Left colon (tissue), 2 donors: ENCODE measurements at regions of chr9 and their contacts with region 1.

Region 1: GRCh38 chr9:34611829-34612630 is at the start of gene RPP25L:
- DNase-seq: peak; percentile 86 to 88
- ATAC-seq: peak; percentile 95
- total RNA-seq, gene RPP25L: 36.4 to 40.7 TPM

Region 2: GRCh38 chr9:34701769-34702736 is 90.0 kb after region 1 on chr9:
- intact Hi-C with region 1: loop called in 1 of 2 experiments (anchors 10 kb)
- DNase-seq: peak; percentile 80 to 91
- ATAC-seq: peak; percentile 95

Region 3: GRCh38 chr9:34759432-34760134 is 147.6 kb after region 1 on chr9:
- intact Hi-C with region 1: no loop called
- DNase-seq: no peak
- ATAC-seq: no peak

Region 4: GRCh38 chr9:35116898-35117551 is 505.0 kb after region 1 on chr9:
- intact Hi-C with region 1: no loop called
- DNase-seq: peak; percentile 91
- ATAC-seq: peak; percentile 56